SK-N-SH (cell line): ENCODE measurements at regions of chr1 and their contacts with region 1.

Region 1: DNA sequence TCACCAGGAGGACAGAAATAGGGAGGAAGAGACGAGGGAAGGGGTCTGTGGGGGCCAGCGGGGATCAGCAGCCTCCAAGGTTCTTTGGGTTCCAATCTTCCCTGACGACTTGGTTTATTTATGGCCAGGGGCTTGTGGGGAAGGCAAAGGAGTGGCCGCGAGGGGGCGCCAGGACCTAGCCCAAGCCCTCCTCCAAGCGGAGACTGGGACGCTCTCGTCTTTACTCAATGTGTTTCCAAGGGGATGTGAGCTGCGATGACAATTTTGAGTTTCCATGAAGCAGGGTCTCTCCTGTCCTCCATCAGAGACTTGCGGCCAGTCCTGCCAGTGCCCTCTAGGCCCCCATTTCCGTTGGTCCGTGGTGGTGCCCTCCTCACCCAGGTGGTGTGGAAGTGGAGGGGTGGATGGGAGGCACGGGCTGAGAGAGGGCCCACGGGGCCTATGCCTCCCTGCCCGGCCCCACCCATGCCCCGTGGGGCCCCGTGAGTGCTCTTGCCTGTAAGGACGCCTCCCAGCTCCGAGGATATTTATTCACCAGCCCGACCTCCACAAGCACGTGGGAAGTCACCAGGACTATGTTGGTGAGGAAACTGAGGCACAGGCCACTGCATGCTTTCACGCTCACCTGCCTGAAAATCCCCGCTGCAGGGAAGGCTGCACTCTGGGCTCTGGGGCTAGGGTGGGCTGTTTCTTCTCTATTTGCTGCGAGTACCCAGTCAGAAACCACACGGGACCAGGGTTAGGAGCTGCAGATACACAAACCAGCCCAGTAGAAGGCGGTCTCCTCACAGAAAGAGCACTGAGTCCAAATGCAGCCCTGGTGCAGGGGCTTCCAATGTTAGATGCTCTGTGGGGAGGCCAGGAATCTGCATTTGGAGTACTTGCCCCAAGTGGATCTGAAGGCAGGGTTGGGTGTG is 26.5 kb downstream of the DMRTB1 start:
- DNase-seq: peak; percentile 92
- H3K4me3 ChIP-seq: peak overlapping the region in 1 of 2 experiments; percentile 38; a peak in 1 of 4 replicates
- H3K27ac ChIP-seq: no peak overlapping the region
- H3K4me1 ChIP-seq: peaks cover 0 to 19% of the 10 kb centered on the region in 2 experiments; a peak in 1 of 4 replicates
- H3K27me3 ChIP-seq: no peaks in the 10 kb centered on the region; the same call in 1 of the 2 replicates
- CTCF ChIP-seq: peak; percentile 93
- EP300 ChIP-seq: no peak
- RAD21 ChIP-seq: peak; percentile 98

Region 2: DNA sequence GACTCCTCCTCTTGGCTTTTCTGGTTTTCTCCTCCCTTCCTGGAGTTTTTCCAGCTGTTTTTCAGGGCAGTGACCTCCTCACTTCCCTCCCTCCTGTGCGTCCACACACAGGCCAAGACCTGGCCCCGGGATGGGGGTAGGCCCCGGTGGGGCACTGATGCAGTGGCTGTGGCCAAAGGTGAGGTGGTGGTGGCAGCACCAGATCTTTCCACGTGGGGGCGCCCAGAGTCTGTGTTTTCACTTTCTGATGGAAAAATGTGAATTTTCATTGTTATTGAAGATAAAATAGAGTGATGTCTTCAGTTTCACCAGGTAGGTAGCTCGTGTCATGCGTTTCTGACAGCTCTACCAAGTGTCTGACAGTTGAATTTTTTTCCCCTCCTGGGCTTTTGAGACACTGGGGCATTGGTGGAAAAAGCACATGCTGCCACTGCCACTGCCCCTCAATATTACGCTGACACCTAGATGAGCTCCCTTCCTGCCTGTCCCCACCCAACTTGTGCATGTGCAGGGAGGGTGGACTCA is 207.5 kb before region 1 on chr1:
- CTCF ChIA-PET with region 1: interaction called, 12 read pairs
- POLR2A ChIA-PET with region 1: no interaction called
- DNase-seq: peak; percentile 89
- H3K4me3 ChIP-seq: no peak overlapping the region; a peak in 1 of 4 replicates
- H3K27ac ChIP-seq: no peak overlapping the region
- H3K4me1 ChIP-seq: peaks cover 0 to 10% of the 10 kb centered on the region in 2 experiments; a peak in 1 of 4 replicates
- H3K27me3 ChIP-seq: no peaks in the 10 kb centered on the region
- CTCF ChIP-seq: peak; percentile 93
- EP300 ChIP-seq: no peak
- RAD21 ChIP-seq: peak; percentile 95

Region 3: GRCh38 chr1:53419034-53419433 is 66.7 kb before region 1 on chr1:
- CTCF ChIA-PET with region 1: no interaction called
- POLR2A ChIA-PET with region 1: no interaction called
- DNase-seq: no peak
- H3K4me3 ChIP-seq: no peak overlapping the region
- H3K27ac ChIP-seq: no peak overlapping the region
- H3K4me1 ChIP-seq: peaks cover 0 to under 1% of the 10 kb centered on the region in 2 experiments; a peak in 2 of 4 replicates
- H3K27me3 ChIP-seq: no peaks in the 10 kb centered on the region; the same call in 1 of the 2 replicates
- CTCF ChIP-seq: no peak
- EP300 ChIP-seq: no peak
- RAD21 ChIP-seq: no peak

Region 4: DNA sequence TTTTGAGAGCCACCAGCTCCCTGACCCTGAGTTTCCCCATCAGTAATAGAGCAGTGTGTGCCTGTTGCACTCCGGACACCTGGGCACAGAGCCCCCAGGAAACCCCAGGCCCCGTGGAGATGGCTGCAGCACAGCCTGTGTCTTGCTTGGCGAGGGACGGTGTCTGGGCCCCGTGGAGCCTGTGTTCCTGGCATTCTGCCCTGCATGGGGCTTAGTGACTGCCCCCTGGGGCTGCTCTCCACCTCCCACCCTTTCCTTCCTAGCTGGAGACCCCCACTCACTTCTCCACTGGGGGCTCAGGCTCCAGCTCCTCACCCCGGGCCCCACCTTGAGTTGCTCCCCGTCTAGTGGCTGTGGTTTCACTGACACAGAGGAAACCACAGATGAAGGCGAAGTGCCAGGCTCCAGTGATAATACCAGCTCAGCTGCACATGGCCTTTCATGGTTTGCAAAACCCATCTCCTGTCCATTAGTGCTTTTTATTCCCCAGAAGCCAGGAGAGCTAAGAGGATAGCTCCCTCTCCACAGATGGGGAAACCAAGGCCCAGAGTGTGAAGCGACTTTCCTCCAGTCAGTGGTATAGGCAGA is 12.9 kb after region 1 on chr1:
- CTCF ChIA-PET with region 1: interaction called, 23 read pairs
- POLR2A ChIA-PET with region 1: no interaction called
- DNase-seq: no peak
- H3K4me3 ChIP-seq: no peak overlapping the region
- H3K27ac ChIP-seq: peak overlapping the region in 1 of 2 experiments; percentile 78; a peak in 1 of 4 replicates
- H3K4me1 ChIP-seq: peaks cover 5 to 50% of the 10 kb centered on the region in 2 experiments; a peak in 1 of 4 replicates
- H3K27me3 ChIP-seq: no peaks in the 10 kb centered on the region
- CTCF ChIP-seq: no peak
- EP300 ChIP-seq: no peak
- RAD21 ChIP-seq: no peak

Region 5: DNA sequence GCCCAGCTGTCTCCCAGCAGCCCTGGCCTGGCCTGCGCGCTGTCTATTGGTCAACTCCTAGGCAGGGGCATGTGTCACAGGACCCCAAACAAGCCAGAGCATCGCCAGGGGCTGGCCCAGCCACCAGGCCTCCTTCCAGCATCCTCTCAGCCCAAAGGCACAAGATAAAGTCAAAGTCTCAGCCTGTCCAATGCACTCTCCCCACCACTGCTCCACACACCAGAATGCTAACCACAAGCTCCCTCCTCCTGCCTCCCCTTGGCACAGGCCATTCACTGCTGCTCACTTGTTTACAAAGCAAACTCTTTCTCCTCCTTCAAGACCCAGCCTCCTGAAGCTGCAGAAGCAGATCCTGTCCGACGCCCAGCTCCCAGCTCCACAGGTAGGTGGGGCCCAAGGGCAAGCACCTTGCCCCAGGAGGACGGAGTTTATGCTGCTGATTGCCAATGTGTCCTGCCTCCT is 106.8 kb after region 1 on chr1:
- CTCF ChIA-PET with region 1: interaction called, 40 read pairs
- POLR2A ChIA-PET with region 1: no interaction called
- DNase-seq: peak; percentile 66
- H3K4me3 ChIP-seq: no peak overlapping the region
- H3K27ac ChIP-seq: peak overlapping the region in 1 of 2 experiments; percentile 96; a peak in 2 of 4 replicates
- H3K4me1 ChIP-seq: peaks cover 6 to 58% of the 10 kb centered on the region in 2 experiments; a peak in 2 of 4 replicates
- H3K27me3 ChIP-seq: no peaks in the 10 kb centered on the region
- CTCF ChIP-seq: no peak
- EP300 ChIP-seq: 0 out of 4 replicates have a peak, but pooled peaks of 1 of the 2 experiments have one; percentile 5
- RAD21 ChIP-seq: no peak

Region 6: GRCh38 chr1:53669637-53670191 is 184.0 kb after region 1 on chr1:
- CTCF ChIA-PET with region 1: interaction called, 12 read pairs
- POLR2A ChIA-PET with region 1: no interaction called
- DNase-seq: peak; percentile 77
- H3K4me3 ChIP-seq: no peak overlapping the region
- H3K27ac ChIP-seq: peak overlapping the region in 1 of 2 experiments; percentile 95; a peak in 3 of 4 replicates
- H3K4me1 ChIP-seq: peaks cover 0 to 32% of the 10 kb centered on the region in 2 experiments; a peak in 2 of 4 replicates
- H3K27me3 ChIP-seq: no peaks in the 10 kb centered on the region
- CTCF ChIP-seq: no peak
- EP300 ChIP-seq: peak in 1 of 2 experiments; percentile 78; a peak in 2 of 4 replicates
- RAD21 ChIP-seq: peak; percentile 36; the same call in 1 of the 2 replicates

Region 7: GRCh38 chr1:53715478-53715877 is 229.7 kb after region 1 on chr1:
- CTCF ChIA-PET with region 1: interaction called, 13 read pairs
- POLR2A ChIA-PET with region 1: no interaction called
- DNase-seq: peak; percentile 64
- H3K4me3 ChIP-seq: no peak overlapping the region
- H3K27ac ChIP-seq: no peak overlapping the region
- H3K4me1 ChIP-seq: no peaks in the 10 kb centered on the region; a peak in 1 of 4 replicates
- H3K27me3 ChIP-seq: no peaks in the 10 kb centered on the region
- CTCF ChIP-seq: peak; percentile 61
- EP300 ChIP-seq: no peak
- RAD21 ChIP-seq: peak; percentile 51

Region 8: DNA sequence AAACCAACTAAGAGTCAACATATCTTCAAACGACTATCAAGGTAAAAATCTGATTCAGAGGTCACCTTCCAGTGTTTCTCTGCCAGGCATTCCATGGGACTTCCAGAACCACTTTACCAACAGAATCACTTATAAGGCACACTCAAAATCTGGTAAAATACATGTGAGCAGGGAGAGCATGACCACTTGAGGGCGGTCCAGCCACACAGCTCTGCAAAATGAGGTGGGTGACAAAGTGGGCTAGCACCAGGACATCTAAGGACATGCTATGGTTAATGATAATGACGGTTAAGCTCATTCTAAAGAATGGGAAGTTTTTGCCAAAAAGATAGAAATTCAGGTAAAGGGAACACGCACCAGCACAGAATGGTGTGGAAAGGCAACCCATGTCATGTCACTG is 277.7 kb after region 1 on chr1:
- CTCF ChIA-PET with region 1: interaction called, 18 read pairs
- POLR2A ChIA-PET with region 1: no interaction called
- DNase-seq: no peak
- H3K4me3 ChIP-seq: no peak overlapping the region
- H3K27ac ChIP-seq: no peak overlapping the region
- H3K4me1 ChIP-seq: peaks cover 0 to 14% of the 10 kb centered on the region in 2 experiments; a peak in 2 of 4 replicates
- H3K27me3 ChIP-seq: no peaks in the 10 kb centered on the region
- CTCF ChIP-seq: no peak
- EP300 ChIP-seq: no peak
- RAD21 ChIP-seq: 0 out of 2 replicates have a peak, but pooled peaks have one; percentile 3

Region 9: GRCh38 chr1:54081306-54082270 is 595.9 kb after region 1 on chr1:
- CTCF ChIA-PET with region 1: no interaction called
- POLR2A ChIA-PET with region 1: no interaction called
- DNase-seq: peak; percentile 57
- H3K4me3 ChIP-seq: no peak overlapping the region; a peak in 1 of 4 replicates
- H3K27ac ChIP-seq: no peak overlapping the region
- H3K4me1 ChIP-seq: no peaks in the 10 kb centered on the region
- H3K27me3 ChIP-seq: no peaks in the 10 kb centered on the region
- CTCF ChIP-seq: peak; percentile 80
- EP300 ChIP-seq: no peak
- RAD21 ChIP-seq: peak; percentile 56